A673 (cell line): ENCODE measurements at regions of chr4 and their contacts with region 1.

Region 1: GRCh38 chr4:119628308-119629141 is at the start of gene PDE5A:
- DNase-seq: peak; percentile 86
- H3K4me3 ChIP-seq: peak within 1 kb of the TSS; percentile 68
- H3K27ac ChIP-seq: no peak within 1 kb of the TSS
- H3K4me1 ChIP-seq: peaks cover 3% of the 10 kb centered on the region
- H3K27me3 ChIP-seq: no peaks in the 10 kb centered on the region
- CTCF ChIP-seq: peak; percentile 72
- total RNA-seq, gene PDE5A: 1.2 TPM in 2 replicates

Region 2: DNA sequence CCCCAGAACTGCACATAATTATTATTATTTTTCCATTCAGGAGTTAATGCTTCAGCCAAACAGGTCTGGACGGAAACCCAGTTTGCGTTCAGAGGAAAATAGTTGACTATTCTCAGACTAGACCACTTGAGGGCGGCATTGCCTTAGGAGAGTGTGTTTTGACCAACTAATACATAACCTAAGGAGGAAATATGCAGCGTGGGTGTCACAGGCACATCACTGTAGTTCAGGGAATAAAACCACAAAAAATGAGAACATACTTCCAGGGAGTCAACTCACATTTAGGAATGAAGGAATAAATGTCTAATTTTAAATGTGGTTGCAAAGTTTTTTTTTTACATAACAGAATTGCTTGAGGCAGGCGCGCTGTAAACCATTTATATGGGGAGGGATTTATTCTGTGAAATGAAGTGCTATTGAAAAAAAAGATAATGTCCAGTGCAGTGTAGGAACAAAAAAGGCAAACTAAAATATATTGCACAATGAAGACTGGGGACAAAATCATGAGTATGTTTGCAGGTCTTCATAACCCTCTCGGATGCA is 646.6 kb before region 1 on chr4:
- CTCF ChIA-PET with region 1: no interaction called
- POLR2A ChIA-PET with region 1: no interaction called
- intact Hi-C with region 1: loop called (anchors 1 kb)
- DNase-seq: peak; percentile 74
- H3K4me3 ChIP-seq: no peak overlapping the region
- H3K27ac ChIP-seq: no peak overlapping the region
- H3K4me1 ChIP-seq: no peaks in the 10 kb centered on the region
- H3K27me3 ChIP-seq: no peaks in the 10 kb centered on the region
- CTCF ChIP-seq: peak; percentile 79

Region 3: DNA sequence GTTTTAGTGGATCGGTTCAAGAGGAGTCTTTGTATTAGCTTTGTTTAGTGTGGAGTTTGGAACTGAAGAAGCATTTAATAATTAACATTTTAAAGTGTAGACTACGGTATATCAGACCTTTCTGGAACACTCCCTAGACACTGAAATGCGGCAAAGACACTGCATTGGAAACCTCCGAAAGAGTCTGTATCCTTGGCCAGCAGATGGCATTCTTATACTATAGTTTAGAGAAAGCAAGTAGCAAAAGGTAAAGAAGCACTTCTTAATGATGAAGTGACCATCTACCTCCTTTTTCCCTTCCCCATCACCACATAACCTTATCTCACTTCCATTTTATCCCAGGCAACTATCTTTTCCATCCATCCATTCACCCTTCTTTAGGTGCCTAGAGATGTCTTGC is 314.2 kb before region 1 on chr4:
- CTCF ChIA-PET with region 1: no interaction called
- POLR2A ChIA-PET with region 1: no interaction called
- intact Hi-C with region 1: loop called (anchors 1 kb)
- DNase-seq: peak; percentile 53
- H3K4me3 ChIP-seq: no peak overlapping the region
- H3K27ac ChIP-seq: no peak overlapping the region
- H3K4me1 ChIP-seq: no peaks in the 10 kb centered on the region
- H3K27me3 ChIP-seq: no peaks in the 10 kb centered on the region
- CTCF ChIP-seq: peak; percentile 54

Region 4: GRCh38 chr4:119559044-119559647 is 69.4 kb before region 1 on chr4:
- CTCF ChIA-PET with region 1: interaction called, 8 read pairs
- POLR2A ChIA-PET with region 1: no interaction called
- intact Hi-C with region 1: loop called (anchors 2 kb)
- DNase-seq: peak; percentile 60
- H3K4me3 ChIP-seq: no peak overlapping the region
- H3K27ac ChIP-seq: no peak overlapping the region
- H3K4me1 ChIP-seq: no peaks in the 10 kb centered on the region
- H3K27me3 ChIP-seq: no peaks in the 10 kb centered on the region
- CTCF ChIP-seq: peak; percentile 61

Region 5: DNA sequence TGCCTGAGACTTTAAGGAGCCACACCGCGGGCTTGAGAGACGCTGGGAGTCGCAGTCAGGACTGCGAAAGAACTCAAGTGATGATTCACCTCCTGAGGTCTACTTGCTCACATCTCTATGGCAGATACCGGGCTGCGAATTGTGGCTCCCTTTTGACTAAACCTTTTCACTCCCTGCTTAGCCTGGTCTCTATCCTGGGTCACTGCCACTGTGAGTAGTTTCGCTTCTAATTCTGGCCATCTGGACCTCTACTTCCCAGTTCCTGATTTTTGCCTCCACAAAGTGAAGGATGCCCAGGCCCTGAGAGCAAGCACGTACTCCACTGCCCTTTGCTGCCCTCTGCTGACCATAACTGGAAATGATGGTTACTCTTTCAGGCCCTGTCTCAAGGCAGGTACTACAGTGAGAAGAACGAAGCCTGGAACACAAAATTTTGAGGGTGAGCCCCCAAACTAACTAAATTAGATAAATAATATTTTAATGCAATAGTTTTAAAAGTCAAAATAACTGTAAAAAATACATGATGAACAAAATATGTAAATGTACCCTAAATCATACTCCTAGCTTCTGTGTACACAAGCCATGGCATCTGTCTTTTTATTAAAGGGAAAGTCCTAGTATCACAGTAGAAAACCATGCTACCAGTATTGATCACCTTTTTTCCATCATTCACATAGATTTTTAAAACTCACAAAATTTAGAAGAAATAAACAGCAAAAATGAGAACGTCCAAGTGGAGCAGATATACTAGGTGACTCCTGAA is 421.4 kb after region 1 on chr4:
- CTCF ChIA-PET with region 1: interaction called, 5 read pairs
- POLR2A ChIA-PET with region 1: no interaction called
- intact Hi-C with region 1: loop called (anchors 2 kb)
- DNase-seq: peak; percentile 80
- H3K4me3 ChIP-seq: no peak overlapping the region
- H3K27ac ChIP-seq: no peak overlapping the region
- H3K4me1 ChIP-seq: peaks cover 18% of the 10 kb centered on the region
- H3K27me3 ChIP-seq: no peaks in the 10 kb centered on the region
- CTCF ChIP-seq: peak; percentile 82

Region 6: GRCh38 chr4:120056246-120056645 is 427.7 kb after region 1 on chr4:
- CTCF ChIA-PET with region 1: interaction called, 13 read pairs
- POLR2A ChIA-PET with region 1: no interaction called
- intact Hi-C with region 1: loop called (anchors 2 kb)
- DNase-seq: peak; percentile 43
- H3K4me3 ChIP-seq: no peak overlapping the region
- H3K27ac ChIP-seq: no peak overlapping the region
- H3K4me1 ChIP-seq: peaks cover 18% of the 10 kb centered on the region
- H3K27me3 ChIP-seq: no peaks in the 10 kb centered on the region
- CTCF ChIP-seq: peak; percentile 52; the same call in 1 of the 2 replicates

Region 7: DNA sequence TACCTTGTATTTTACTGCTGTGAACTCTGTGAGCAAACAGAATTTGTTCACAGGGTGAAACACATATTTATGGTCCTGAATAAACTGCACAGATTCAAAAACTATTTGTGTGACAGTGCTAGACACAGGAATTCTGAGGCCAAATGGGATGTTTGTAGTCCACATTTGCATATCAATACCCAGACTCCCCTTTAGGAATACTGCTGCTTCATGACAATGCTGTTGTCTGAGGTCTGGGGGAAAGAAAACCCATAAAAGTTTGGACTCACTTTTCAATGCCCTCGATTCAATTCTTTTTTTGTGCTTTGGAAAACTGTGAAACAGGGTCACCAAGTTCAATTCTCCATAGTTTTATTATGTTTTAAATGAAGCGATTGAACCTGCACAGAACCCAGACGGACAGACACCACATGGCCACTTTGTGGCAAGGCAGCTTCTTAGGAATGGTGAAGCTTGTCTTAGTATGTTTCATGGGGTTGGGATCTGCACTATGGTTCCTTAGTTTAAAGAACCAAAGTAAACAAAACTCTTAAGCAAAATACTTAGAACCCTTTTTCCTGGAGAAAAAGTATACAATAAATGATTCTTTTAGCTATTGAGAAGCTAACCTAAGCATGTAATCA is 530.4 kb after region 1 on chr4:
- CTCF ChIA-PET with region 1: no interaction called
- POLR2A ChIA-PET with region 1: no interaction called
- intact Hi-C with region 1: no loop called
- DNase-seq: no peak
- H3K4me3 ChIP-seq: no peak overlapping the region
- H3K27ac ChIP-seq: no peak overlapping the region
- H3K4me1 ChIP-seq: no peaks in the 10 kb centered on the region
- H3K27me3 ChIP-seq: no peaks in the 10 kb centered on the region
- CTCF ChIP-seq: no peak